Posterior vena cava (tissue), 2 donors: ENCODE measurements at regions of chr4 and their contacts with region 1.

Region 1: GRCh38 chr4:87235020-87235671 is 14.7 kb upstream of the KLHL8 start:
- DNase-seq: no peak

Region 2: DNA sequence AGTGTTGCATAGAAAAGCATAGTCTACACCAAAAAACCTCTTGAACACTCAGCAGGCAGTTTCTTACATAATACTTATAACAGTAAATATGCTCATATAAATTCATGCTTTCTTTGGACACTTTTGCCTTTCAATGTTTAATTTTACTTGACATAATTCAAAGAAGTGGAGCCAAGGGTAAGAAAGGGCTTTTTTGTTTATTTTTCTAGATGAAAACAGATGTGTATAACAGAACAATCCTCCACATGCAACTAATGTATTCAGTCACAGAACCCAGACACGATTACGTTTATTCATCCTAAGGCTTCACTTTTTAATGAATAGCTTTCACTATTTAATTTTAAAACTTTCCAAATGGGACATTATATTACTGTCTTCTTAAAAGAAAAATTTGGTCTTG is 699.0 kb before region 1 on chr4:
- intact Hi-C with region 1: no loop called
- DNase-seq: no peak

Region 3: DNA sequence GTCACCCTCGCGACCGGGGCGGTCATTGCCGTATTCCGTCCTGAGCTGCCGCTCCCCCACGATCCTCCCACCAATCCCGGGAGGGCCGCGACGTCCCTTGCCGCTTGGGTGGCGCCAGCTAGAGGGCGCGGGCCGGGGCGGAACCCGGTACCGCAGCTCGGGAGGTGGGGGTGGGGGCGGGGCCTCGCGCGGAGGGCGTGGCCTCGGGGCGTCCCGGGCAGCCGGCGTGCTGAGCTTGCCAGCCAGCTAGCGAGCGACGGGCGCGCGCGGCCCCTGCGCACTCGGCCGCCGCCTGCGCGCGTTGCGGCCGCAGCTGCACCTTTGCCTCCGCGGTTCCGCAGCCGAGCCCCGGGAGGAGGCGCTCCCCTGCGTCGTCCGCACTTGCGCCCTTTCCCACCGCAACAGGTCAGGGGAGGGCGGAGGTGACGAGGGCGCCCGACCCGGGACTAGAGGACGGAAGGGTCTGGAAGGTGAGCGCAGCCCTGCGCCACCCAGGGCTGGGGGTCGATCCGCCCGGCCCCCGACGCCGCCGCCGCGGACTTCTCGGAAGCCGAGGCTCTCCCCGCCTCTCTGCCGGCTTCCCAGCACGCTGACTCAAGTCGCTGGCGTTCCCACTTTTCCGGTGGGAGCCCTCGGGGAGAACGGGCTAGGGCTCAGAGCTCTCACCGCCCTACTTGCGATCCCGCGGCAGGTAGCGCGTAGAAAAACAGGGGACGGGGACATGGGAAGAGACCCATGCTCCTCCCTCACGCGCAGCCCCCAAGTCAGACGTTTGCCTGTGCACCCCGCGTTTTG is 300.2 kb before region 1 on chr4 and contains the start of gene AFF1:
- intact Hi-C with region 1: loop called in 1 of 2 experiments (anchors 10 kb)
- DNase-seq: peak; percentile 98
- total RNA-seq, gene AFF1: 89.5 to 97.5 TPM

Region 4: GRCh38 chr4:87150498-87151261 is 84.5 kb before region 1 on chr4:
- intact Hi-C with region 1: loop called (anchors 5 kb)
- DNase-seq: no peak

Region 5: DNA sequence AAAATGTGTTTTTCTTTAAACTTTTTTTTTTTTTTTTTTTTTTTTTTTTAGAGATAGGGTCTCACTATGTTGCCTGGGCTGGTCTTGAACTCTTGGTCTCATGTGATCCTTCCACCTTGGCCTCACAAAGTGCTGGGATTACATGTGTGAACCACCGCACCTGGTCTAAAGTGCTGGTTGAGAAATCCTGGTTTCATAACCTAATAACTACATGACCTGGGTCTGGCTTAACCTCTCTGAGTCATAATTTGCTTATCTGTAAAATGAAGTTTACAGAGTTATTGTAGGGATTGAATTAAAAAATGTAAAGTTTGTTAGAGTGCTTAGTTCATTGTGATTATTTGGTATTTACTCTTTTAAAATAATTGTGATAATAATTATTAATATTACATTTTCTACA is 82.4 kb after region 1 on chr4:
- intact Hi-C with region 1: no loop called
- DNase-seq: no peak

Region 6: GRCh38 chr4:87651941-87652340 is 416.8 kb after region 1 on chr4:
- intact Hi-C with region 1: no loop called
- DNase-seq: no peak